Caco-2 (cell line): ENCODE measurements at regions of chr2 and their contacts with region 1.

Region 1: GRCh38 chr2:68909793-68910674 is 38.8 kb upstream of the BMP10 start:
- DNase-seq: peak; percentile 68 to 76
- H3K4me3 ChIP-seq: no peak overlapping the region
- H3K4me3 Mint-ChIP-seq: no peak overlapping the region
- H3K27ac Mint-ChIP-seq: no peak overlapping the region
- H3K4me1 ChIP-seq: no peaks in the 10 kb centered on the region
- H3K4me1 Mint-ChIP-seq: no peaks in the 10 kb centered on the region
- H3K27me3 ChIP-seq: no peaks in the 10 kb centered on the region
- H3K27me3 Mint-ChIP-seq: no peaks in the 10 kb centered on the region
- CTCF ChIP-seq: peak; percentile 85 to 96

Region 2: DNA sequence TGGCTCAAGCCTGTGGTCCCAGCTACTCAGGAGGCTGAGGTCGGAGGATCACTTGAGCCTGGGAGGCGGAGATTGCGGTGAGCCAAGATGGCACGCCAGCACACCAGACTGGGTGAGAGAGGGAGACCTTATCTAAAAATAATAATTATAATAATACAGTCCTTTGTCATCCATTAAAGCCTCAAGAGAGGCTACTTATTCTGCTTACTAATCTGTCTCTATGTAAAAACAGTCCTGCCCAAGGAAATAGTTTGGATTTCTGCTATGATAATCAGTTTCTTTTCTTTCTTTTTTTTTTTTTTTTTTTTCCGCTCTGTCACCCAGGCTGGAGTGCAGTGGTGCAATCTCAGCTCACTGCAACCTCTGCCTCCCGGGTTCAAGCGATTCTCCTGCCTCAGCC is 1075.6 kb before region 1 on chr2:
- CTCF ChIA-PET with region 1: interaction called, 10 read pairs
- POLR2A ChIA-PET with region 1: no interaction called
- intact Hi-C with region 1: no loop called
- DNase-seq: no peak
- H3K4me3 ChIP-seq: no peak overlapping the region
- H3K4me3 Mint-ChIP-seq: no peak overlapping the region
- H3K27ac Mint-ChIP-seq: no peak overlapping the region
- H3K4me1 ChIP-seq: no peaks in the 10 kb centered on the region
- H3K4me1 Mint-ChIP-seq: no peaks in the 10 kb centered on the region
- H3K27me3 ChIP-seq: no peaks in the 10 kb centered on the region
- H3K27me3 Mint-ChIP-seq: peaks cover 4% of the 10 kb centered on the region
- CTCF ChIP-seq: no peak

Region 3: GRCh38 chr2:68837164-68837860 is 72.7 kb before region 1 on chr2:
- CTCF ChIA-PET with region 1: no interaction called
- POLR2A ChIA-PET with region 1: no interaction called
- intact Hi-C with region 1: loop called (anchors 5 kb)
- DNase-seq: peak in 1 of 2 experiments; percentile 11
- H3K4me3 ChIP-seq: no peak overlapping the region
- H3K4me3 Mint-ChIP-seq: no peak overlapping the region
- H3K27ac Mint-ChIP-seq: no peak overlapping the region
- H3K4me1 ChIP-seq: no peaks in the 10 kb centered on the region
- H3K4me1 Mint-ChIP-seq: no peaks in the 10 kb centered on the region
- H3K27me3 ChIP-seq: no peaks in the 10 kb centered on the region
- H3K27me3 Mint-ChIP-seq: no peaks in the 10 kb centered on the region
- CTCF ChIP-seq: peak in 1 of 2 experiments; percentile 18

Region 4: GRCh38 chr2:69007169-69007568 is 97.1 kb after region 1 on chr2:
- CTCF ChIA-PET with region 1: no interaction called
- POLR2A ChIA-PET with region 1: no interaction called
- intact Hi-C with region 1: no loop called
- DNase-seq: no peak
- H3K4me3 ChIP-seq: no peak overlapping the region
- H3K4me3 Mint-ChIP-seq: no peak overlapping the region
- H3K27ac Mint-ChIP-seq: no peak overlapping the region
- H3K4me1 ChIP-seq: no peaks in the 10 kb centered on the region
- H3K4me1 Mint-ChIP-seq: no peaks in the 10 kb centered on the region
- H3K27me3 ChIP-seq: 0 out of 2 replicates have a peak, but pooled peaks cover 2% of the 10 kb centered on the region
- H3K27me3 Mint-ChIP-seq: peaks cover 24% of the 10 kb centered on the region
- CTCF ChIP-seq: no peak